ENCODE measurements at regions of chr22 and their contacts with region 1.

Region 1: DNA sequence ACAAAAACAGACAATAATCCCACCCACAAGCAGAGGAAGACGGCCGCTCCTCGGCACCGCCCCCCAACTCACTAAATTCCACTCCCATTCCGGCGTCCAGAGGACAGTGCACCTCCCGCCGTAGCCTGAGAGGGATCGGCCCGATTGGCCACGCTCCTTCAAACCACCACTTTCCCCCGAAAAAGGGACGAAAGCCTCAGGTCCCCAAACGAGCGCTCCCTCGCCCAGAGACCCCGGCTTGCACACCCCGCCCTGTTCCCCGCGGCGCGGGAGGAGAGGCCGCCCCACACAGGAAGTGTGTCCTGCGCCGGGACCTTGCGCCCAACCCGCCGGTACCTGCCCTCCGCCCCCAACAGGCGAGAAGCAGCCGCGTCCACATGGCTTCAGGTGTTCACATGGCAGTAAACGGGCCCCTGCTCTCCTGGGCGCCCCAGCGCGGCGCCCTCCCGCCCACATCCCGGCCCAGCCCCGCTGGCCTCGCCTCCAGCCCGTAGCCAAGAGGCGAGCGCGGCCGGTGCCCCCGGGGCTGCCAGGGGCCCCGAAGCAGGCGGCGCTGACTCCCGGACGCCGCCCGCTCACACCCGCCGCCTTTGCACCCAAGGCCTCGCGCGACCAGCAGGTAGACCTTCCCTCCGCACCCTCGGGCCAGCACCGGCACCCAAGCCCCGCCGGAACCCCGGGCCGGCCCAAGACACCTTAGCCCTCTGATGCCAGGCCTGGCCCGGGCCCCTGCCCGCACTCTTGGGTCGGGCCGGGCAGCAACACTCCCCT is 861 bp downstream of the TCF20 start:
- DNase-seq: peak in 2 of 10 donors; percentile 34 to 86

Region 2: DNA sequence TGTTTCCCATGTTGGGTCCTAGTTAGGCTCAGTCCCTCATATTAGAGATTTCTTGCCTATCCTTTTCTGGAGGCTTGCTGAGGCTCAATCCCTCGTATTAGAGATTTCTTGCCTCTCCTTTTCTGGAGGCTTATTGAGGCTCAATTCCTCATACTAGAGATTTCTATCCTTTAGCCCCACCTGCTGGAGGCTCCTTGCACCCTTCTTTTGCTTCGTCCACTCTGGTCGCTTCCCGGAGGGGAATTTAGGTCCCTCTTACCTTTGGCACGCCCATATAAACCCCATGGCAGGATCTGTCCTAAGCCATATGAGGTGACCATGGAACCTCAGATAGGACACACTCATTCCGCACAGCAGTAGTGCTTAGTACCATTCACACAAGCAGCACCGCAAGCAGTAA is 154.9 kb before region 1 on chr22:
- intact Hi-C with region 1: no loop called
- DNase-seq: no peak

Region 3: GRCh38 chr22:42160830-42161696 is 108.5 kb before region 1 on chr22:
- intact Hi-C with region 1: no loop called
- DNase-seq: peak in 1 of 10 donors; percentile 37

Region 4: DNA sequence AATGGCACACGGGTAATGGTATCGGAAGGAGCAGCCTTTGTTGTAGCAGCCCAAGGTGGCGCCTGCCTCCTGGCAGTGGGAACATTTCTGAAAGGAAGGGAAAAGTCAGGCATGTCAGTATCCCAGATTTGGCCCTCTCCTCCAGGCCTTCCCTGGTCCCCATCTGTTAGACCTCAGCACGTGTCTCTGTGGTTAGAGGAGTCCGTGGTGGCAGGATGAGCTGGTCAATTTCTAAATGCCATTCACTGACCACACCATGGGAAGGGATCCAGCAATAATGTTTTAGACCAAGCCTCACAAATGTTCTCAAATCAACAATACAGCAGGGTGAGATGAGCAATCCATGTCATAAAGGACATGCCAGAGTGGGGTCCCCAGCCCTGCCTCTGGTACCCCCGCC is 90.0 kb before region 1 on chr22:
- intact Hi-C with region 1: loop called (anchors 10 kb)
- DNase-seq: no peak

Region 5: GRCh38 chr22:42214633-42215415 is 54.8 kb before region 1 on chr22:
- intact Hi-C with region 1: loop called (anchors 10 kb)
- DNase-seq: peak; percentile 74 to 98 (median 83)

Region 6: GRCh38 chr22:42511401-42511891 is 241.9 kb after region 1 on chr22:
- intact Hi-C with region 1: no loop called
- DNase-seq: peak in 3 of 10 donors; percentile 65 to 84 (median 73)

Measured in posterior cingulate gyrus (tissue), 11 donors.